Adrenal gland (tissue), 19 donors: ENCODE measurements at regions of chr22 and their contacts with region 1.

Region 1: GRCh38 chr22:39559454-39560105 is 11.0 kb upstream of the CACNA1I start:
- DNase-seq: peak in 4 of 7 donors; percentile 19 to 49 (median 42)
- H3K4me3 ChIP-seq: no peak overlapping the region
- H3K27ac ChIP-seq: peak overlapping the region in 2 of 5 donors; percentile 37 to 65
- H3K4me1 ChIP-seq: peaks cover 0 to 10% of the 10 kb centered on the region in 2 donors
- H3K27me3 ChIP-seq: peaks cover 5% of the 10 kb centered on the region
- CTCF ChIP-seq: peak; percentile 15 to 54 (median 34)
- POLR2A ChIP-seq: no peak

Region 2: GRCh38 chr22:39664485-39665200 is 105.1 kb after region 1 on chr22:
- intact Hi-C with region 1: no loop called
- DNase-seq: no peak
- H3K4me3 ChIP-seq: no peak overlapping the region
- H3K27ac ChIP-seq: no peak overlapping the region
- H3K4me1 ChIP-seq: peaks cover 0 to 6% of the 10 kb centered on the region in 2 donors
- H3K27me3 ChIP-seq: peaks cover 38% of the 10 kb centered on the region
- CTCF ChIP-seq: no peak
- POLR2A ChIP-seq: no peak

Region 3: GRCh38 chr22:39808081-39808480 is 248.5 kb after region 1 on chr22:
- intact Hi-C with region 1: loop called in 1 of 2 experiments (anchors 10 kb)
- DNase-seq: peak in 5 of 7 donors; percentile 25 to 68 (median 46)
- H3K4me3 ChIP-seq: no peak overlapping the region
- H3K27ac ChIP-seq: no peak overlapping the region
- H3K4me1 ChIP-seq: no peaks in the 10 kb centered on the region
- H3K27me3 ChIP-seq: peaks cover 46% of the 10 kb centered on the region
- CTCF ChIP-seq: peak in 4 of 6 experiments; percentile 19 to 47 (median 36)
- POLR2A ChIP-seq: no peak